ENCODE measurements at regions of chr9 and their contacts with region 1.

Region 1: GRCh38 chr9:69190086-69190862 is 16.2 kb downstream of the TJP2 start:
- DNase-seq: no peak
- H3K4me3 Mint-ChIP-seq: no peak overlapping the region
- H3K27ac Mint-ChIP-seq: no peak overlapping the region
- H3K4me1 Mint-ChIP-seq: peaks cover 12% of the 10 kb centered on the region
- H3K27me3 Mint-ChIP-seq: no peaks in the 10 kb centered on the region

Region 2: DNA sequence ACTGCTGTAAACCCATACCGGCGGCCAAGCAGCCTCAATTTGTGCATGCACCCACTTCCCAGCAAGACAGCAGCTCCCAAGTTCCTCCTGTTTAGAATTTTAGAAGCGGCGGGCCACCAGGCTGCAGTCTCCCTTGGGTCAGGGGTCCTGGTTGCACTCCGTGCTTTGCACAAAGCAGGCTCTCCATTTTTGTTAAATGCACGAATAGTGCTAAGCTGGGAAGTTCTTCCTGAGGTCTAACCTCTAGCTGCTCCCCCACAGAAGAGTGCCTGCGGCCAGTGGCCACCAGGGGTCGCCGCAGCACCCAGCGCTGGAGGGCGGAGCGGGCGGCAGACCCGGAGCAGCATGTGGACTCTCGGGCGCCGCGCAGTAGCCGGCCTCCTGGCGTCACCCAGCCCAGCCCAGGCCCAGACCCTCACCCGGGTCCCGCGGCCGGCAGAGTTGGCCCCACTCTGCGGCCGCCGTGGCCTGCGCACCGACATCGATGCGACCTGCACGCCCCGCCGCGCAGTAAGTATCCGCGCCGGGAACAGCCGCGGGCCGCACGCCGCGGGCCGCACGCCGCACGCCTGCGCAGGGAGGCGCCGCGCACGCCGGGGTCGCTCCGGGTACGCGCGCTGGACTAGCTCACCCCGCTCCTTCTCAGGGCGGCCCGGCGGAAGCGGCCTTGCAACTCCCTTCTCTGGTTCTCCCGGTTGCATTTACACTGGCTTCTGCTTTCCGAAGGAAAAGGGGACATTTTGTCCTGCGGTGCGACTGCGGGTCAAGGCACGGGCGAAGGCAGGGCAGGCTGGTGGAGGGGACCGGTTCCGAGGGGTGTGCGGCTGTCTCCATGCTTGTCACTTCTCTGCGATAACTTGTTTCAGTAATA is 154.6 kb before region 1 on chr9 and contains the start of gene FXN:
- CTCF ChIA-PET with region 1: interaction called, 42 read pairs
- intact Hi-C with region 1: loop called (anchors 1 kb)
- DNase-seq: peak; percentile 86
- H3K4me3 Mint-ChIP-seq: peak within 1 kb of the TSS; percentile 95
- H3K27ac Mint-ChIP-seq: peak within 1 kb of the TSS; percentile 85
- H3K4me1 Mint-ChIP-seq: peaks cover 24% of the 10 kb centered on the region
- H3K27me3 Mint-ChIP-seq: no peaks in the 10 kb centered on the region
- total RNA-seq, gene FXN: 16.8 to 17.3 TPM

Region 3: DNA sequence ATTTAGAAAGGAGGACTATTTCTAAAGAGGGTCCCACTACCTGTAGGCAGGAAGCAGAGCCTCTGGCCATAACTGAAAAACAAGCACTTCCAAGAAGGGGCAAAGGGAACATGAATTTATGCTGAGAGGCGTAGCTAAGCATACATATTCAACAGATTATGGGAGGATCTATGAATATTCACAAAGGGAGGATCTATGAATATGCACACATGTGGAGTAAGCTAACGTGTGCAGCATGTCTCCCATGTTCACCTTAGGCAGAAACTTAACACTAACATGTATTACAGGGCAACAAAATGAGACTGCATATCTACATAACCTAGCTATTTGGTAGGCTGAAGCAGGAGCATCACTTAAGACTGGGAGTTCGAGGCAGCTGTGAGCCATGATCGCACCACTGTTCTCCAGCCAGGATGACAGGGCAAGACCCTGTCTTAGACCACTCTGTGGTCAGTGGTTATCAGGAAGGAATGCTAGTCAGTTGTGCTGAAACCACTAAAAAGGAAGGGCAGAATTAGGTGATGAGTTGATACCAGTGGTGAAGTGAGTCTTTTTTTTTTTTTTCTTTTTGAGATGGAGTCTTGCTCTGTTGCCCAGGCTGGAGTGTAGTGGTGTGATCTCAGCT is 134.0 kb before region 1 on chr9:
- CTCF ChIA-PET with region 1: interaction called, 121 read pairs
- intact Hi-C with region 1: loop called (anchors 1 kb)
- DNase-seq: no peak
- H3K4me3 Mint-ChIP-seq: no peak overlapping the region
- H3K27ac Mint-ChIP-seq: no peak overlapping the region
- H3K4me1 Mint-ChIP-seq: no peaks in the 10 kb centered on the region
- H3K27me3 Mint-ChIP-seq: no peaks in the 10 kb centered on the region

Region 4: GRCh38 chr9:69121828-69122548 is 68.3 kb before region 1 on chr9:
- CTCF ChIA-PET with region 1: interaction called, 3 read pairs
- intact Hi-C with region 1: loop called (anchors 5 kb)
- DNase-seq: peak; percentile 56
- H3K4me3 Mint-ChIP-seq: peak overlapping the region; percentile 87
- H3K27ac Mint-ChIP-seq: no peak overlapping the region
- H3K4me1 Mint-ChIP-seq: peaks cover 13% of the 10 kb centered on the region
- H3K27me3 Mint-ChIP-seq: no peaks in the 10 kb centered on the region

Region 5: GRCh38 chr9:69155341-69156030 is 34.8 kb before region 1 on chr9:
- CTCF ChIA-PET with region 1: interaction called, 17 read pairs
- intact Hi-C with region 1: loop called (anchors 1 kb)
- DNase-seq: no peak
- H3K4me3 Mint-ChIP-seq: no peak overlapping the region
- H3K27ac Mint-ChIP-seq: no peak overlapping the region
- H3K4me1 Mint-ChIP-seq: no peaks in the 10 kb centered on the region
- H3K27me3 Mint-ChIP-seq: no peaks in the 10 kb centered on the region

Region 6: DNA sequence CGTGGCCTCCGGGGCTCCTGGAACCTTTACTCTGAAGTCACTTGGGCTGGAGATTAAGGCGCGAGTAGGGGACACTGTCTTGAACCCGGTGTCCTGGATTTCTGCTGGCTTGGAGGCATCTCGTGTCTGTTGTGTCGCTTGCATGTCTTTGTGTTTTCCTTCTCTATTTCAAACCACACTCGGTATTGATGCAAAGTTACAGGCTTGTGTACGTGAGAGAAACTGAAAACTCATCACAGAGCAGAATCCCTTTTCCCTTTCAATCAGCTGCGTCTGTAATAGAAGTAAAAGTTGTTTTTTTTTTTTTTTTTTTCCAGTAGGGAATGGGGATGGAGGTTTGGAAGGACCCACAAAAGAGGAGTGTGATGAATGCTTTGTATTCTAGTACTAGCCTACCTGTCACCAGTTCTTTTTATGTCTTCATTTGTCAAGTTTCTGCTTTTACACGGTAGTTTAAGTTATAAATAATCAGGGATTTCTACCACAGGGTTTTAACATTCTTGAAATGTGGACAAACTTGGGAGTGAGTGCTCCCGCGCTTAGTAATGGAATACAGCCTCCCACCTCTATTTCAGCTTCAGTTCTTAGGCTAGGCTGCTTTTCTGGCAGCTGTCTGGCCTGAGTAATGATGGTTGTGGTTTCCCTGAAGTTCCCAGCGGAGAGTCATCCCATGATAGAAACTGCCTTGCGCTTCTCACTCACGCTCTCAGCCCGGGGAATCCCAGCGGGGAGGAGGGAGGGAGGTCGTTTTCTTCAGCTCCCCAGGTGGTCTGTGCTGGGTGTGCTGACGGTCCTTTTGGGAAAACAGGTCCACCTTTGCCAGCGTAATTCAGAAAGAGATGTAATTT is 15.4 kb before region 1 on chr9:
- CTCF ChIA-PET with region 1: interaction called, 16 read pairs
- intact Hi-C with region 1: loop called (anchors 1 kb)
- DNase-seq: peak; percentile 84
- H3K4me3 Mint-ChIP-seq: peak overlapping the region; percentile 77
- H3K27ac Mint-ChIP-seq: peak overlapping the region; percentile 37
- H3K4me1 Mint-ChIP-seq: peaks cover 39% of the 10 kb centered on the region
- H3K27me3 Mint-ChIP-seq: peaks cover 43% of the 10 kb centered on the region

Region 7: DNA sequence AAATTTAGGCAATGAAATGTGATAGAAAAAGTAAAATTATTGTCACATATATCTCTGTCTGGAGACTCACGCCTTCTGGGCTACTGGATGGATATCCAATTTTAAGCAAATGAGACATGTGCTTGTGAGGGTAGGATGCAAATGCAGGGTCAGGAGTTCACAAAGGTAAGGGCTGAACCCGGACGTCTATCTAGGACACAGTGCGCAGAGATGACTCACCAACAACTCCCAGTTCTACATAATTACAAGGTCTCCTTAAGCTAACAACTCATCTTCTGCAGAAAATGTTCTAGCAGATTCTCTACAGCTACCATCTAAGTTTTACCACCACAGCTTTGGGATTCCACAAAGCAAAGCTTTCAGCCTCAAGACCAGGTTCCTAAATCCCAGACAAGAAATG is 295.2 kb after region 1 on chr9:
- CTCF ChIA-PET with region 1: no interaction called
- intact Hi-C with region 1: no loop called
- DNase-seq: no peak
- H3K4me3 Mint-ChIP-seq: no peak overlapping the region
- H3K27ac Mint-ChIP-seq: no peak overlapping the region
- H3K4me1 Mint-ChIP-seq: no peaks in the 10 kb centered on the region
- H3K27me3 Mint-ChIP-seq: no peaks in the 10 kb centered on the region

Measured in activated naive CD4-positive, alpha-beta T cell treated with anti-CD3 and anti-CD28 coated beads for 36 hours (primary cell).